ENCODE measurements at regions of chr9 and their contacts with region 1.

Region 1: DNA sequence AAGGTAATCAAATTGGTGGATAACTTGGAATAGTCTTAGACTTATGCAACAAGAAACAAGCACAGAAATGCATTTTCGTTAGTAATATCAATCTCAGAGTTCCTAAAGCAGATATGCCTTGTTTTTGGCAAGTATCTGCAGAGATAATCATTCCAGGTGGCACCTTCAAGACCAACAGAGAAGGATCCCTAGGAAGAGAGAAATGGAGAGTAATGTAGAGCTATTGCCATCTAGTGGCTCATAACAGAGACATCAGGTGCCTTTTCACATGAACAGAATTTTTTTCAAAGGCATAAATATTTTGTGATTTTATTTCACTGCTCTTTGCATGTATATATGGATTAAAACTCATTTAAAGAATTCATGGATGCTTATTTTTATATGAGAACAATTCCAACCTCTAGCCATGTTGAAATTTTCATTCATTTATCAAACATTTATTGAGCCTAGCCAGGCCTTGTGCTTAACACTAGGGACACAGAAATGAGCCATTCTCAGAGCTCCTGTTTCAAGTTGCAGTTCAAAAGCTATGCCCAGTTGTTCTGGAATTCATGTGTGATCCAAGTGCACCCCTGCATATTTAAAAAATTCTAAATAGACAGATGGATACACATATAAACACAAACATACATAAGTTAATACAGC is 117.5 kb upstream of the OR13F1 start:
- DNase-seq: peak; percentile 43
- ATAC-seq: 0 out of 2 replicates have a peak, but pooled peaks have one; percentile 45
- H3K4me3 ChIP-seq: no peak overlapping the region
- H3K27ac ChIP-seq: no peak overlapping the region
- H3K4me1 ChIP-seq: no peaks in the 10 kb centered on the region
- H3K27me3 ChIP-seq: no peaks in the 10 kb centered on the region
- CTCF ChIP-seq: peak; percentile 70

Region 2: DNA sequence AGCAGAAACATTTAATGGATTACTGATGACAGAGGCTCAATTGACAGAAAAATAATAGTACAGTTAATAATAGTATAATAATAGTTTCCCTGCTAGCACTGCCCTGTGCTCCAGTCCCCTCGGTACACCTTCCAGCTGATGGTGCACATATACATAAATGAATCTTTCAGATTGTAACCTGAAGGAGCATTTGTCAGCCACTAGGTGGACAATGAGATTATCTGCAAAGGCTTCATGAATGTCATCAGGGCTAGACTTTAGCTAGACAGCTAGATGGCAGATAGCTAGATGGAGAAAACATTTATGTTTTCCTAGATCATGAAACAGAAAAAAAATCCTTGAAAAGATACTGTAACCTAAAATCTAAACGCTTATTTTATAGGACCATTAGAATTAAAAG is 596.9 kb before region 1 on chr9:
- CTCF ChIA-PET with region 1: interaction called, 3 read pairs
- POLR2A ChIA-PET with region 1: no interaction called
- intact Hi-C with region 1: loop called (anchors 1 kb)
- DNase-seq: peak; percentile 10
- ATAC-seq: peak; percentile 46
- H3K4me3 ChIP-seq: no peak overlapping the region
- H3K27ac ChIP-seq: no peak overlapping the region
- H3K4me1 ChIP-seq: no peaks in the 10 kb centered on the region
- H3K27me3 ChIP-seq: no peaks in the 10 kb centered on the region
- CTCF ChIP-seq: peak; percentile 52

Region 3: GRCh38 chr9:104027295-104027694 is 359.3 kb before region 1 on chr9:
- CTCF ChIA-PET with region 1: no interaction called
- POLR2A ChIA-PET with region 1: no interaction called
- intact Hi-C with region 1: loop called (anchors 2 kb)
- DNase-seq: no peak
- ATAC-seq: no peak
- H3K4me3 ChIP-seq: no peak overlapping the region
- H3K27ac ChIP-seq: no peak overlapping the region
- H3K4me1 ChIP-seq: no peaks in the 10 kb centered on the region
- H3K27me3 ChIP-seq: no peaks in the 10 kb centered on the region
- CTCF ChIP-seq: no peak

Region 4: DNA sequence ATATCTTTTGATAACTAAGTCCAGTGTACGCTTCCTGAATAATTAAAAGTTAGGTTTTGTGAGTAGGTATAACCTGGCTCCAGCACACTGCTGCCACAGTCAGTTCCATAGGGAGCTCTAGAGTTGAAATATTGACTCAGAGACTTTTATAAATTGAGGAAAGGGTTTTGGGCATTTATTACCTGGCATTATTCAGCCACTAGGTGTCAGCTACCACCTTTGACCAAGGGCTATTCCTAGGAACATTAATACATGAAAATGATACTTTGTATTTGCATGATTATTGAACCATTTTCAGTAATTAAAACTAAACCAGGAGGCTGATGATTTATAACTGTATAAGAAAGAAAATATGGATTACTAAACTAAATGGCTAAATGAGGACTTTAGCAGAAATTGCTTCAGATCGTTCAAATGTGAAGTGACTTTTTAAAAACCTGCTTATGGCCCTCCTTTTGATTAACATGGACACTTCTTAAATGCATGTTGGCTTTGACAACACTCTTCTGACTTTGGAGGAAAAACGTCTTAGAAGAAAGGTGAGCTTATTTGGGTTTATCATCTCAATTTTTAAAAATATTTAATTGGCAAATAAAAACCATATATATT is 209.4 kb before region 1 on chr9:
- CTCF ChIA-PET with region 1: interaction called, 9 read pairs
- POLR2A ChIA-PET with region 1: no interaction called
- intact Hi-C with region 1: loop called (anchors 1 kb)
- DNase-seq: peak; percentile 42
- ATAC-seq: 0 out of 2 replicates have a peak, but pooled peaks have one; percentile 27
- H3K4me3 ChIP-seq: no peak overlapping the region
- H3K27ac ChIP-seq: no peak overlapping the region
- H3K4me1 ChIP-seq: no peaks in the 10 kb centered on the region
- H3K27me3 ChIP-seq: no peaks in the 10 kb centered on the region
- CTCF ChIP-seq: peak; percentile 58

Region 5: GRCh38 chr9:104279535-104280190 is 106.9 kb before region 1 on chr9:
- CTCF ChIA-PET with region 1: no interaction called
- POLR2A ChIA-PET with region 1: no interaction called
- intact Hi-C with region 1: loop called (anchors 5 kb)
- DNase-seq: peak; percentile 68
- ATAC-seq: peak; percentile 35
- H3K4me3 ChIP-seq: no peak overlapping the region
- H3K27ac ChIP-seq: peak overlapping the region; percentile 61
- H3K4me1 ChIP-seq: peaks cover 3% of the 10 kb centered on the region; the same call in 1 of the 2 replicates
- H3K27me3 ChIP-seq: no peaks in the 10 kb centered on the region
- CTCF ChIP-seq: no peak

Measured in PC-3 (cell line).